H1 (cell line): ENCODE measurements at regions of chr4 and their contacts with region 1.

Region 1: DNA sequence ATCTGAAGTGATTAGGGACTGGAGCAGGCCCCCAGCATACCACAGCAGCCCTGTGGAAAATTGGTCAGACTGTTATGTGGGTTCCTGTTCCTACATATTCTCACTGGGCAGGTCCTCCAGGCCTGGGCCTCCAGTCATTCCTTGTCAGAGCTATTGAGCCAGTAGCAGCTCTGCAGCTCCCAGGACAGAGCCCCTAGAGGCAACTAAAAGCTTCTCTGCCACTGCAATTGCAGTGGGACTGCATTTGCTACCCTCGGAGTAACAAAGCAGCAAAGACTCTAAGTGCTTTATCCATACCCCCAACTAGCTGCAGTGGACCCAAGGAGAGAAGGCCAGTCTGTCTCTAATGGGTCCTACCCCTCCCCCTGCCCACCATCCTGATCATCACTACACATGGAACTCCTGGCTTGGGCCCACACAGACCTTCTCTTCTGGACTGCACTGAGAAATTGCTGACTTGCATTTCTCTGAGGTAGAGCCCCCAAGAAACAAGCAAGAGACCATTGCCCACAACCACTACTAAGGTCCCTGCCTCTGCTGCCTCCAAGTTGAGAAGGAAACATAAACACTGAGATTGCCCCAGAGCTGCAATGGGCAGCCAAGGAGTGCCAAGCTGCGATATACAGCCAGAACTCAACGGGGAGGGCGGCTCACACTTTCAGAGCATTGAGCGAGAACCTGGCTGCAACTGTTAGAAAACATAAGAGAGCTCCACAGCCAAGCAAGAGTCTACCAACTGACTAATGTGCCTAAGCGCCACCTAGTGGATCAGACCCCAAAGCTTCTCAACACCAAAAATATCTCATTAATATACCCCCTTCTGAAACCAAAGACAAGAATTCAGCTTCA is 738.7 kb upstream of the NDST4 start:
- DNase-seq: peak; percentile 33 to 67
- H3K4me3 ChIP-seq: no peak overlapping the region
- H3K27ac ChIP-seq: no peak overlapping the region
- H3K4me1 ChIP-seq: no peaks in the 10 kb centered on the region
- H3K27me3 ChIP-seq: no peaks in the 10 kb centered on the region
- CTCF ChIP-seq: peak in 2 of 3 experiments; percentile 66 to 70; a peak in 3 of 4 replicates
- EP300 ChIP-seq: no peak
- POLR2A ChIP-seq: no peak
- RAD21 ChIP-seq: peak; percentile 78 to 82

Region 2: DNA sequence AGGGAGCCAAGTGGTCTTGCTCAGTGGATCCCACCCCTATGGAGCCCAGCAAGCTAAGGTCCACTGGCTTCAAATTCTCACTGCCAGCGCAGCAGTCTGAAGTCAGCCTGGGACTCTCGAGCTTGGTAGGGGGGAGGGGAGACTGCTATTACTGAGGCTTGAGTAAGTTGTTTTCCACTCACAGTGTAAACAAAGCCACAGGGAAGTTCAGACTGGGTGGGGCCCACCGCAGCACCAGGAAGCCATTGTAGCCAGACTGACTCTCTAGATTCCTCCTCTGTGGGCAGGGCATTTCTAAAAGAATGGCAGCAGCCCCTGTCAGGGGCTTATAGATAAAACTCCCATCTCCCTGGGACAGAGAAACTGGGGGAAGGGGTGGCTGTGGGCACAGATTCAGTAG is 17.7 kb before region 1 on chr4:
- CTCF ChIA-PET with region 1: interaction called, 11 read pairs
- POLR2A ChIA-PET with region 1: no interaction called
- DNase-seq: no peak
- H3K4me3 ChIP-seq: no peak overlapping the region
- H3K27ac ChIP-seq: no peak overlapping the region
- H3K4me1 ChIP-seq: no peaks in the 10 kb centered on the region
- H3K27me3 ChIP-seq: no peaks in the 10 kb centered on the region
- CTCF ChIP-seq: no peak
- EP300 ChIP-seq: no peak
- POLR2A ChIP-seq: no peak
- RAD21 ChIP-seq: no peak

Region 3: GRCh38 chr4:115873048-115873447 is 20.9 kb after region 1 on chr4:
- CTCF ChIA-PET with region 1: interaction called, 13 read pairs
- POLR2A ChIA-PET with region 1: no interaction called
- DNase-seq: no peak
- H3K4me3 ChIP-seq: no peak overlapping the region
- H3K27ac ChIP-seq: no peak overlapping the region
- H3K4me1 ChIP-seq: no peaks in the 10 kb centered on the region
- H3K27me3 ChIP-seq: no peaks in the 10 kb centered on the region
- CTCF ChIP-seq: peak; percentile 23 to 41 (median 40); a peak in 3 of 4 replicates
- EP300 ChIP-seq: no peak
- POLR2A ChIP-seq: no peak
- RAD21 ChIP-seq: peak in 1 of 2 experiments; percentile 9; a peak in 1 of 4 replicates

Region 4: GRCh38 chr4:116001265-116001664 is 149.1 kb after region 1 on chr4:
- CTCF ChIA-PET with region 1: no interaction called
- POLR2A ChIA-PET with region 1: no interaction called
- DNase-seq: no peak
- H3K4me3 ChIP-seq: no peak overlapping the region
- H3K27ac ChIP-seq: no peak overlapping the region
- H3K4me1 ChIP-seq: no peaks in the 10 kb centered on the region
- H3K27me3 ChIP-seq: no peaks in the 10 kb centered on the region
- CTCF ChIP-seq: no peak
- EP300 ChIP-seq: no peak
- POLR2A ChIP-seq: no peak
- RAD21 ChIP-seq: no peak